Natural killer cell (primary cell): ENCODE measurements at regions of chr1 and their contacts with region 1.

Region 1: GRCh38 chr1:92623187-92623778 is 136.6 kb upstream of the GFI1 start:
- DNase-seq: peak in 1 of 2 donors; percentile 61
- ATAC-seq: peak in 2 of 3 donors; percentile 38 to 53
- H3K4me3 ChIP-seq: no peak overlapping the region
- H3K4me3 Mint-ChIP-seq: no peak overlapping the region
- H3K27ac ChIP-seq: no peak overlapping the region
- H3K27ac Mint-ChIP-seq: no peak overlapping the region
- H3K4me1 ChIP-seq: no peaks in the 10 kb centered on the region
- H3K4me1 Mint-ChIP-seq: no peaks in the 10 kb centered on the region
- H3K27me3 ChIP-seq: no peaks in the 10 kb centered on the region
- H3K27me3 Mint-ChIP-seq: peaks cover 0 to 3% of the 10 kb centered on the region in 2 donors
- CTCF ChIP-seq: peak; percentile 74

Region 2: DNA sequence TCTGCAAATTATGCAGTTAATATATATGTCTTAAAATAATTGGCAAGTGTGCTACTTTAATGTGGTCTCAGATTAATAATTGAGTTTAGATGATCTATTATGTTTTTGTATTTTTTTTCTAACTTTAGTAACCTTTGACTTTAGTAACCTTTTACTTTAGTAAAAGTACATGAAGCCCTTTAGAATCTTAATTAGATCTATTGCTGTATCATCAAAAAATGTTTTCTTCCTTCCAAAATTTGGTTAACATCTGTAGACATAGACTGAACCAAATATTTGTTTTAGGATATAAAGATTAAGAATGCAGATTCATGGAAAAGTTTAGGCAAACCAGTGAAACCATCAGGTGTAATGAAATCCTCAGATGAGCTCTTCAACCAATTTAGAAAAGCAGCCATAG is 619.2 kb before region 1 on chr1:
- intact Hi-C with region 1: loop called (anchors 2 kb)
- DNase-seq: no peak
- ATAC-seq: no peak
- H3K4me3 ChIP-seq: no peak overlapping the region
- H3K4me3 Mint-ChIP-seq: no peak overlapping the region
- H3K27ac ChIP-seq: no peak overlapping the region
- H3K27ac Mint-ChIP-seq: no peak overlapping the region
- H3K4me1 ChIP-seq: no peaks in the 10 kb centered on the region
- H3K4me1 Mint-ChIP-seq: no peaks in the 10 kb centered on the region
- H3K27me3 ChIP-seq: no peaks in the 10 kb centered on the region
- H3K27me3 Mint-ChIP-seq: no peaks in the 10 kb centered on the region
- CTCF ChIP-seq: no peak

Region 3: DNA sequence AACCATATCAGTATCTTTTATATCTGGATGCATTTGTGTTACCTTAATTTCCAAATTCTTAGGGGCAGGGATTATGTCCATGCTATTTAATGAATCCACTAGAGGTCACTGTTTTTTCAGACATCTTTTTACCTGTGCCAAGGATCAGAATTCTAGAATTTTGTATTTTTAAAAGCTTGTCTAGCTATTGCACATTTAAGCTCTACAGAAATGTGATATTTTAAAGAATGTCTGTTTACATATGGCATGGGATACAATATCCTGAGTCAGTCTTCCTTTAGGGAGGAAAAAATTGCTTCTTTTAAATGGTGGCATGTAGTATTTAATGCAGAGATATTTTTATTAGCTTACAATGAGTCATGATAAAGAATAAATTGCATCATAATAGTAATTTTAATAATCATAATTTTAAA is 313.1 kb before region 1 on chr1:
- intact Hi-C with region 1: loop called (anchors 1 kb)
- DNase-seq: peak in 1 of 2 donors; percentile 69
- ATAC-seq: peak; percentile 56 to 78 (median 71)
- H3K4me3 ChIP-seq: no peak overlapping the region
- H3K4me3 Mint-ChIP-seq: no peak overlapping the region
- H3K27ac ChIP-seq: no peak overlapping the region
- H3K27ac Mint-ChIP-seq: no peak overlapping the region
- H3K4me1 ChIP-seq: peaks cover 19% of the 10 kb centered on the region
- H3K4me1 Mint-ChIP-seq: peaks cover 12 to 13% of the 10 kb centered on the region in 2 donors
- H3K27me3 ChIP-seq: no peaks in the 10 kb centered on the region
- H3K27me3 Mint-ChIP-seq: no peaks in the 10 kb centered on the region
- CTCF ChIP-seq: peak; percentile 80